ENCODE measurements at regions of chr10 and their contacts with region 1.

Region 1: GRCh38 chr10:5977471-5978229 is at the start of gene IL15RA:
- DNase-seq: peak in 1 of 2 donors; percentile 83
- H3K4me3 ChIP-seq: peak within 1 kb of the TSS; percentile 94 to 99
- H3K27ac ChIP-seq: peak within 1 kb of the TSS; percentile 90 to 98
- H3K4me1 ChIP-seq: peaks cover 0 to 14% of the 10 kb centered on the region in 2 donors
- H3K27me3 ChIP-seq: no peaks in the 10 kb centered on the region
- CTCF ChIP-seq: peak; percentile 4 to 40 (median 36)
- total RNA-seq, gene IL15RA: 24.8 TPM

Region 2: GRCh38 chr10:5423771-5424170 is 553.9 kb before region 1 on chr10:
- intact Hi-C with region 1: no loop called
- DNase-seq: peak in 1 of 2 donors; percentile 74
- H3K4me3 ChIP-seq: peak overlapping the region in 1 of 2 donors; percentile 18
- H3K27ac ChIP-seq: peak overlapping the region; percentile 60 to 72
- H3K4me1 ChIP-seq: peaks cover 0 to 50% of the 10 kb centered on the region in 2 donors
- H3K27me3 ChIP-seq: no peaks in the 10 kb centered on the region
- CTCF ChIP-seq: no peak

Region 3: GRCh38 chr10:5684318-5684970 is 293.2 kb before region 1 on chr10 and contains the start of gene TASOR2:
- intact Hi-C with region 1: loop called (anchors 10 kb)
- DNase-seq: peak; percentile 85 to 98
- H3K4me3 ChIP-seq: peak within 1 kb of the TSS; percentile 85 to 90
- H3K27ac ChIP-seq: peak within 1 kb of the TSS; percentile 85 to 87
- H3K4me1 ChIP-seq: peaks cover 0 to 13% of the 10 kb centered on the region in 2 donors
- H3K27me3 ChIP-seq: no peaks in the 10 kb centered on the region
- CTCF ChIP-seq: no peak
- total RNA-seq, gene TASOR2: 12.2 TPM

Region 4: DNA sequence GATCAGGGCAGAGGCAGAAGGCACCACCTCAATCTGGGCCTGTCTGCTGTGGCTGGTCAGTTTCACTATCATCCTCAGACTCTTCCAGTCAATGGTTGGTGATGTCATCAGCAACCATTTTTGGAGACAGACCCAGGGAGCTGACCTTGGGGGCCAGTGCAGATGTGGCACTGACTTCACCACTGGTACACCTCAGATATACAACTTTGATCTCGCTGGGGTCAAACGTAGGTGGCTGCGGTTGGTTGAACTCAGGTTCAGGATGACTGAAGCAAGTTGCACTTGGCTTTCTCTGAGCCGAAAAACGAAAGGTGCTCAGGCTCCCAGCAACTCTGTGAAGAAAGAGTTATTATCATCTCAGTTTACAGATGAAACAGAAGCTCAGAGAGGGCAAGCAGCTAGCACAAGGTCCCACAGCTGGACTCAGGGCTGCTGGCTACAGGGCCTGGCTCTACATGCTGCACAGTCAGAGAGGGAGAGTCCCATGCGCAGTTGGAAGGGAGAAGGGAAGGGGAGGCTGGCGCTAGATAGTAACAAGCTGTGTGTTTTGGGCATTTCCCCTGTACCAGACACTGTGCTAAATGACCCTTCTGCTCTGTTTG is 115.2 kb before region 1 on chr10:
- intact Hi-C with region 1: no loop called
- DNase-seq: no peak
- H3K4me3 ChIP-seq: no peak overlapping the region
- H3K27ac ChIP-seq: no peak overlapping the region
- H3K4me1 ChIP-seq: no peaks in the 10 kb centered on the region
- H3K27me3 ChIP-seq: no peaks in the 10 kb centered on the region
- CTCF ChIP-seq: no peak

Region 5: DNA sequence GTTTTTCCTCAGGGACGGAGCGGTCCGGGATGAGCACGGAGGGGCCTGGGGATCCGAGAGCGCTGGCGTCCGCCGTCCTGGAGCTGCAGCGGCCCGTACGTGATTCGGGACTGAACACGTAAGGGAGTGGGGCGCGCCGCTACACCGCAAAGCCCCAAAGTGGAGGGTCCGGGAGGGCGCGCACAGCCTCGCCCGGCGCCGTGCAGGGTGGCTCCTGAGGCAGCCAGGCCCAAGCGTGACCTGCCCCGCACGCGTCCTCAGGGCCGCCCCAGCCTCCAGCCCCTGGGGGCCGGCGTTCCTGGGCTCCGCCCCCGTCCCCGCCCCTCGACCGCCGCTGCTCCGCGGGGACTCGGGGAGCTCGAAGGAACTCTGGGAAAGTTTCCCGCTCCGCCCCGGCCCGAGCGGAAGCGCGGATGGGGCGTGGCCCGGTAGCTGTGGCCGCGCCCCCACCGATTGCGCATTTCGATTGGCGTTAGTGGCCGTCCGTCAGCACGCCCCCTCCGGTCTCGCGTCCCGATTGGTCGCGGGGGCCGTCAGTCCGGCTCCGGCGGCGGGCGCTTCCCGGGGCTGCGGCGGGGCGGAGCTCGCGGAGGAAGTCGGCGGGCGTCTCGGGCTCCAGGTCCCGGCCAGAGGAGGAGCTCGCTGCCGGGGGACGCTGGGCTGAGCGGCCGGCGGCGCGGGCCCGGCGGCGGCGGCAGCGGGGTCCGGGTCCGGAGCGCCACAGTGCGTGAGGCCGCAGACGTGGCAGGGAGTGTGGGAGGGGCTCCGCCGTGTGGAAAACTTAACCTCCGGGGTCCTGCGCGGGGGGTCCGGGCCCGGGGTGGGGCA is 87.8 kb before region 1 on chr10 and contains the starts of genes ANKRD16 and FBH1:
- intact Hi-C with region 1: loop called (anchors 1 kb)
- DNase-seq: peak; percentile 86 to 99
- H3K4me3 ChIP-seq: peak within 1 kb of the TSS; percentile 80 to 95
- H3K27ac ChIP-seq: peak within 1 kb of the TSS; percentile 84 to 85
- H3K4me1 ChIP-seq: peaks cover 2 to 25% of the 10 kb centered on the region in 2 donors
- H3K27me3 ChIP-seq: no peaks in the 10 kb centered on the region
- CTCF ChIP-seq: no peak
- total RNA-seq, gene ANKRD16: 10.4 TPM
- total RNA-seq, gene FBH1: 43.0 TPM

Region 6: DNA sequence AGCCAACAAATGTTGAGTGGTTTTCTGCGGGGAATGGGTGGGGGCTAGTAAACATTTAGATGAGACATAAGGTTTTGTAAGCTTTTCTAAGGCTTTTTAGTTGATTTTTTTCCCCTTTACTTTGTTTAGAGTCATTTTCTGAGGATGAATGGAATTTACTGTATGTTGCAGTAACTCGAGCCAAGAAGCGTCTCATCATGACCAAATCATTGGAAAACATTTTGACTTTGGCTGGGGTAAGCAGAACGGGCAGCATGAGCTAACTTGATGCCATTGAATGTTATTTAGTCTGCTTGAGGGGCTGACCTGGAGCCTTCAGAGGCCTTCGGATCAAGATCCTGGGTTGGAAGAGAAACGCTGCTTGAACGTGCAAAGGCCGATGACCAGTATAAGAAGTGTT is 50.3 kb before region 1 on chr10:
- intact Hi-C with region 1: loop called (anchors 2 kb)
- DNase-seq: no peak
- H3K4me3 ChIP-seq: no peak overlapping the region
- H3K27ac ChIP-seq: peak overlapping the region; percentile 70 to 85
- H3K4me1 ChIP-seq: peaks cover 0 to 10% of the 10 kb centered on the region in 2 donors
- H3K27me3 ChIP-seq: no peaks in the 10 kb centered on the region
- CTCF ChIP-seq: no peak